Head of caudate nucleus (tissue), 42 donors: ENCODE measurements at regions of chr3 and their contacts with region 1.

Region 1: GRCh38 chr3:23945903-23946751 is 1.0 kb downstream of the NR1D2 start:
- DNase-seq: peak; percentile 91 to 100 (median 98)

Region 2: DNA sequence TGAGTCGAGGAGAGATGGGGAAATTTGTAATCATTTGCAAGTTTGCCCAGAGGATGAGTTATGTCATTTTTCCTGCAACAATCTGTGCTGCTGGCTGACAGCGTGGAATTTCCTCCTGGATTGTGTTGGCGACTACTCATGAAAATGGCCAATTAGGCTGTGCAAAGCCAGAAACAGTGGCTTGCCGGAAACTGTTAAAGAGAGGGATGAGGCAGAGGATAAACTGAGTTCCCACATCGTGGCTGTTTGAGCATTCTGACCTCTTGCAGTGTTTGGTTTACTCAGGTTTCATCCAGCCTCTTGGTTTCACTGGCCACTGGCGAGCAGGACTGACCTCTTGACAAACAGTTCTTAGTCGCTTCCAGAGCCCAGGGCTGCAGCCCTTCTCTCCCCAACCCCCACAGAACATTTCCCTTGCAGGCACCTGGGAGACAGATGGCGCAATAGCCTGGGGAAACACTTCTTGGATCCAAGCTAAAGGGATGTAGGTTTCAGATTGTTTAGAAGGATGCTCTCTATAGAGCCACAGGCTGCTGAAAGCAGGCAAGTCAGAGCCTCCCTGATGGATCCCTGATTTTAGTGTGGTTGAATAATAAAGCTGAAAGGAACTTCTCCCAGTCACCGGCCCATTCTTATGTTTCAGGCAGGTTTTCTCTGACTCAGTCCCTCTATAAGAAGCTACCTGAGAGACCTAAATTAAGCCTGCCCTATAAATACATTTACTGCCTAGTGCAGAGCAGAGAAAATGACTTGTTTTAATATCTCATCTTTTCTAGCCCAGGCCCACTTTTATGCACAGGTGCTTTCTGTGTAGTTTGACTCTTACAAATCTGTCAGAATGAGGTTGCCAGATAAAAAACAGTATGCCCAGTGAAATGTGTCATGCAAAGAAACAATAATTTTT is 233.2 kb before region 1 on chr3:
- intact Hi-C with region 1: no loop called
- DNase-seq: peak in 9 of 42 donors; percentile 8 to 43 (median 14)

Region 3: DNA sequence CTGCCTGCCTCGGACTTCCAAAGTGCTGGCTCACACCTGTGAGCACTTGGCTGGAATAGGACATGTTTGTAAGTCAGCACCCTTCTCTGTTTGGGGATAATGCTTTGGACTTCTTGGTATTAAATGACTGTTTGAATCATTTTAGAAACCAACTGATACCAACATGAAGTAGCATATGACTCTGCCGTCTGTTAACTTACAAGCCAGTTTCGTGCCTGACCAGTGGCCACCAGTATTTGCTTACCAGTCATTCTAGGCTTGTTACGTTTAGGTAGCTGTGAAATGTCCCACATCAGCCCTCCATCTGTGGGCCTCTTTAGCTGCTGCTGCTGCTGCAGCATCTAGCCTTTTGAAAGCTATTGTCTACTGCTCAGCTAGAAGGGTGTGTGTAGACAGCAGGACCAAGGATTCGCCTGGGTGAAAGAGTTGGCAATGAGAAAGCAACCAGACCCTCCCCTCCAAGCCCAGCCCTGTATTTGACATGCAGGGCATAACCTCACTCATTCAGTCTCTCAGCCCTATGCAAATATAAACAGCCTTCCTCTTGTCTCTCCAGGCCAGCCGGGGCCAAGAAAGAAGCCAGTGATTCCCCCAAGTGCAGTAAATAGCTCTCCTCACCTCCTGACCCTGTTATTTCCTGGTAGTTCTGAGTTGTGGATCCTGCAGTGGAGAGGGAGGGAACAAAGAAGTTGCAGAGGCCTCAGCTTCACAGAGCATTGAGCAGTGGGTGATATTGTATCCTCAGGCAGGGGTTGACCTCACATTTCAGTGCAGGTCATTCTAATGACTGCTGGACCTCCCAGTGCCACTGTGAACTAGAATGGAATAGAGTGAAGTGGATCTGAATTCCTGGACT is 80.3 kb before region 1 on chr3:
- intact Hi-C with region 1: no loop called
- DNase-seq: peak in 38 of 42 donors; percentile 12 to 77 (median 52)

Region 4: GRCh38 chr3:23916886-23917678 is 29.0 kb before region 1 on chr3 and contains the starts of genes NKIRAS1 and RPL15:
- intact Hi-C with region 1: loop called (anchors 1 kb)
- DNase-seq: peak; percentile 93 to 99 (median 97)

Region 5: DNA sequence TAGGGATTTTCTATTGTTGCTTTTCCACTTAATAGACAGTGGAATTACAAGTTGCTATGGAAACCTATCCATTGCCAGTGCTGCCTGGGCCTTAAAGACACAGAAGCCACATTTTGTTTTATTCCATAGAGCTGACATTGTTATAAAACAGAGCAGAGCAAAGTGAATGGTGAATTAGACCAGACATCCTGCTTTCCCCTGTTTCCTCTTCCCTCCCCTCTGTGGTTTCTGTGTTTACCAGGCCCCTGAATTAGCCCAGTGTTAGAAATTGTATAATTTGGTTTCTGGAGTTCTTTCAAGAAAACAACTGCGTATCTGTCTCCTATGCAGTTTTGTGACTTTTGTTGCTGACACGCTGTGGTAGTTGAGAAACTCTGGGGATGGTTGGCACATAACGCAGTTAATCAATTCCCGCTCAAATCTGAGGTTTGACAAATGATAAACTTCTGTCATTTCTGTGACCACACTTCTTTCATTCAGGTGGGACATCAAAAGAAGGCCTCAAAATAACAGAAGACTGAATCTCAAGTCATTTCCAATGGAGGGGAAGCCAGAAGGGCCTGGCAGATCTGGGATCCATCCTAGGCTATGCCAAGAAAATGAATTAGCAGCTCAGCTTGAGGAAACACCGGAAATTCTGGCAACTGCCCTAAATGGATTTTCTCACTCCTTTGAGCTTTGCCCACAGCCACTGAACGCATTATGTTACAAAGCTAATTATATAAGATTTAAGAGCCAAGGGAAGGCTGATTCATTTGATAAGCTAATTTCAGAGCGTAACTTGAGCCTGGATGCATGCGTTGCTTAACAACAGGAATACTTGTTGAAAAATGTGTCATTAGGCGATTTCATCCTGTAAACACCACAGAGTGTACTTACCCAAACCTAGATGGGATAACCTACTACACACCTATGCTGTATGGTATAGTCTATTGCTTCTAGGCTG is 45.8 kb after region 1 on chr3:
- intact Hi-C with region 1: loop called (anchors 2 kb)
- DNase-seq: peak in 28 of 42 donors; percentile 12 to 75 (median 46)